IMR-90 (cell line): ENCODE measurements at regions of chr5 and their contacts with region 1.

Region 1: GRCh38 chr5:442335-443238 is at the start of gene EXOC3:
- DNase-seq: peak; percentile 56
- ATAC-seq: peak; percentile 80
- H3K4me3 ChIP-seq: peak within 1 kb of the TSS; percentile 82
- H3K27ac ChIP-seq: peak within 1 kb of the TSS; percentile 82
- H3K4me1 ChIP-seq: peaks cover 12% of the 10 kb centered on the region
- H3K27me3 ChIP-seq: no peaks in the 10 kb centered on the region
- CTCF ChIP-seq: no peak
- POLR2A ChIP-seq: peak; percentile 81
- RAD21 ChIP-seq: no peak
- total RNA-seq, gene EXOC3: 47.5 and 50.8 TPM in 2 replicates

Region 2: GRCh38 chr5:322281-322941 is 120.2 kb before region 1 on chr5:
- CTCF ChIA-PET with region 1: interaction called, 5 read pairs
- POLR2A ChIA-PET with region 1: interaction called, 4 read pairs
- dilution Hi-C with region 1: no loop called
- in situ Hi-C with region 1: no loop called
- intact Hi-C with region 1: loop called (anchors 2 kb)
- DNase-seq: peak; percentile 36
- ATAC-seq: peak; percentile 40
- H3K4me3 ChIP-seq: peak overlapping the region; percentile 98
- H3K27ac ChIP-seq: peak overlapping the region; percentile 84
- H3K4me1 ChIP-seq: peaks cover 19% of the 10 kb centered on the region
- H3K27me3 ChIP-seq: no peaks in the 10 kb centered on the region
- CTCF ChIP-seq: no peak
- POLR2A ChIP-seq: no peak; the same call in none of the 2 replicates
- RAD21 ChIP-seq: no peak

Region 3: GRCh38 chr5:407801-408268 is 34.8 kb before region 1 on chr5:
- CTCF ChIA-PET with region 1: no interaction called
- POLR2A ChIA-PET with region 1: no interaction called
- dilution Hi-C with region 1: no loop called
- in situ Hi-C with region 1: no loop called
- intact Hi-C with region 1: loop called (anchors 5 kb)
- DNase-seq: no peak
- ATAC-seq: no peak
- H3K4me3 ChIP-seq: no peak overlapping the region
- H3K27ac ChIP-seq: peak overlapping the region; percentile 29; the same call in 1 of the 2 replicates
- H3K4me1 ChIP-seq: peaks cover 18% of the 10 kb centered on the region
- H3K27me3 ChIP-seq: no peaks in the 10 kb centered on the region
- CTCF ChIP-seq: no peak
- POLR2A ChIP-seq: no peak
- RAD21 ChIP-seq: no peak